ENCODE measurements at regions of chr1 and their contacts with region 1.

Region 1: GRCh38 chr1:109426278-109427170 is at the start of gene PSMA5:
- DNase-seq: peak; percentile 98
- total RNA-seq, gene PSMA5: 60.7 TPM

Region 2: GRCh38 chr1:109229531-109230127 is 196.9 kb before region 1 on chr1:
- intact Hi-C with region 1: no loop called
- DNase-seq: no peak

Region 3: DNA sequence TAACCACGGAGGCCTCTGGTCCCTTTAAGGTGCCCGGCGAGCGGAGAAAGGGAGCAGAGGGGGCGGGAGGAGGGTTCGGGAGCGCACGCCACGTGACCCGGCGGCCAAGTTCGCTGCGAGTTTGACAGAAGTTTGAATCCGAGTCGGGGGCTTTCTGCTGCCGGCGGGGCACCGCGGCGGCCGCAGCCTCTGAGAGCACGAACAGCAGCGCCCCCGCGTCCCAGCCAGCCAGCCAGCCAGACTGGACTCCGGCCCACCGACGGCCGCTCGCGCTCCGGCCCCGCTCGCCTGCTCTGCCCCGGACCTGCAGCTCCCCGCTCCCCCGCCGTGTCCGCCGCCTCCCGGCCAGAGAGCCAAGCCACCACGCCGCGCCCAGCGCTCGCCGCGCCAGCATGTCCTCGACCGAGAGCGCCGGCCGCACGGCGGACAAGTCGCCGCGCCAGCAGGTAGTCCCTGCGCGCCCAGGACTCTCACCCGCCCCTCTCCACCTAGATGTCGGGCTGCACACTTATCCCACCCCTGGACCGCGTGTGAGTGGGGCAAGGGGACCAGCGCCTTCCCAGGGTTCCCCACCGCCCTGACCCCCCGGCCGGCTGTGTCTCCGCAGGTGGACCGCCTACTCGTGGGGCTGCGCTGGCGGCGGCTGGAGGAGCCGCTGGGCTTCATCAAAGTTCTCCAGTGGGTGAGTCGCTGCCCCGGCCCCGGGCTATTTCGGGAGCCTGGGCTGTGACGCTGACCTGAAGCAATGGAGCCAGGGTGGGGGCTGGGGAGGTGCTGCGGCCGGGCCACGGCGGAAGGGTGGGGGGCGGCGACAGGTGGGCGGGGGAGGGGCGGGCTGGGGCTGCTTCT is 40.2 kb after region 1 on chr1 and contains the start of gene SYPL2:
- intact Hi-C with region 1: loop called (anchors 5 kb)
- DNase-seq: peak; percentile 86
- total RNA-seq, gene SYPL2: 28.9 TPM

Region 4: DNA sequence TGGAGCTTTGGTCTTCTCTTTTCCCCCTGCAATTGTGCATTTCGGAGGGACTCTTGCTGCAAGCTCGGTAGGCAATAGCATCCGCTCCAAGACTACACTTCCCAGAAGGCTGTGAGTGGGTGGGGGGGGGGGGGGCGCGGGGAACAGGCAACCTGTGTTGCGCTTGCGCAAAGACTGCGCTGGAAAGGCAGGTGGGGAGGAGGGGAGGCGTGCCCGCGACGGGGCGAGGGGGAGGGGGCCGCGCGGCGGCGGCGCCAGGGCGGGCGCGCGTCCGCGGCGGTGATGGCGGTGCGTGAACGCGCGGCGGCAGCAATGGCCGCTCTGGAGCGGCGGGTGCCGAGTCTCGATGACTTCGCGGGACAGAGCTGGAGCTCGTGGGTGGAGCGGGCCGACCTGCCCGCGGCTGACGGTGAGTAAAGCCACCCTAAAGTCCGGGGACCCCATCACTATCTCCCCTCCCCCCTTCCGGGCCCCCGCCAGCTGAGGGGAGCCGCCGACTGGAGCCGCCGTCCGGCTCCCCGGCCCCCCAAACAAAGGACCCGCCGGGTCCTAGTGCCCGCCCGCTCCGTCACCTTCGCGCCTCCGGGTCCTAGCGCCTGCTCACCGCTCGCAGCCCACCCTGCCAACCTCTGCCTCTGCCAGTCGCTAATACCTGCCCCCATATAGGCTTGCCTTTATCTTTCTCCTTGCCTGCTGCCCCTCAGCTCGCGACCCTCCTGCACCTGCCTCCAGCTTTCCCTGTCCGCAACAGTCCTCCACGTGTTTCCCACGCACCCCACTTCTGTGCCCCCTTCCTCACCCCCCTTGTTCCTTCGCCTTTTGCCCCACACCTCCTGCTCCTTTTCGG is 57.4 kb after region 1 on chr1 and contains the start of gene ATXN7L2:
- intact Hi-C with region 1: loop called (anchors 1 kb)
- DNase-seq: peak; percentile 95
- total RNA-seq, gene ATXN7L2: 3.8 TPM

Region 5: GRCh38 chr1:110580244-110580643 is 1153.7 kb after region 1 on chr1:
- intact Hi-C with region 1: no loop called
- DNase-seq: peak; percentile 54

Measured in cardiac septum (tissue), 1 donor.